ENCODE measurements at regions of chr18 and their contacts with region 1.

Region 1: GRCh38 chr18:62584241-62585120 is 61.7 kb downstream of the ZCCHC2 start:
- DNase-seq: peak; percentile 94
- H3K4me3 ChIP-seq: peak overlapping the region in 3 of 4 donors; percentile 15 to 24 (median 16)
- H3K27ac ChIP-seq: peak overlapping the region; percentile 10 to 66 (median 42)
- H3K4me1 ChIP-seq: peaks cover 0 to 21% (median 12%) of the 10 kb centered on the region in 4 donors
- H3K27me3 ChIP-seq: no peaks in the 10 kb centered on the region
- CTCF ChIP-seq: peak; percentile 98 to 99 (median 98)
- EP300 ChIP-seq: no peak
- POLR2A ChIP-seq: no peak

Region 2: DNA sequence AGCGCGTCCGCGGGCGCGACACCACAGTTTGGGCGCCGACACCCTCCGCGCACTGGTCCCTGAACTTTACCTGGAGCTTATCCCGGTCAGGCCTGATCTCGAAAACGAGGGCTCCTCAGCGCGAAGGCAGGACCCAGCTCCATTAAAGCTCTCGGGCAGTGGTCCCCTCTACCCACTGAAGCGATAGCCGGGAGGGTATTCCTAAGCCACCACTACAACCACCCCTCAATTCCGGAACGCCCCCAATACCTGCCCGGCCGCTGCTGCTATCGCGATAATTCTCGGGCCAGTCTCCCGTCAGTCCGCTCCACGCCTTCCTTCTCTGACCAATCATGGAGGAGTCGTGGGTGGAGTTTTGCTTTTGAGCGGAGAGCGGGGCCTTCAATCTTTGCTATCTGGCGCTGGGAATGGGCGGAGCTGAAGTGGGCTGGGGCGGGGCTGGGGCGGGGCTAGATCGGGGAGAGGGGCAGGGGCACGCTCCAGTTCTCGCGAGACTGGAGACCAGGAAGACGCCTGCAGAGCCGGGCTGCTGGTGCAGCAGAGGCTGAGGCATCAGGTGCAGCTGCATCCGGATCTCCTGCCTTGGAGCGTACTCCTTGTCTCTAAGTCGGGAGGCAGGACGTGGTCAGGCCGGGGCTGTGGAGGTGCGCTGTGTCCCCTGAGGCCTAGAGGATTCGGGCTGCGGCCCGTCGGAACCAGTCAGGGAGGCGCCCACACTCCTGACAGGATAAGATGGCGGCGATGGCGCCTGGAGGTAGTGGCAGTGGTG is 397.5 kb before region 1 on chr18 and contains the starts of genes PIGN and RELCH:
- intact Hi-C with region 1: loop called (anchors 5 kb)
- DNase-seq: peak; percentile 98
- H3K4me3 ChIP-seq: peak within 1 kb of the TSS; percentile 85 to 97 (median 91)
- H3K27ac ChIP-seq: peak within 1 kb of the TSS; percentile 79 to 90 (median 85)
- H3K4me1 ChIP-seq: peaks cover 0 to 41% (median 30%) of the 10 kb centered on the region in 4 donors
- H3K27me3 ChIP-seq: no peaks in the 10 kb centered on the region
- CTCF ChIP-seq: no peak
- EP300 ChIP-seq: no peak
- POLR2A ChIP-seq: peak; percentile 77 to 88
- total RNA-seq, gene PIGN: 18.4 to 23.2 (median 19.8) TPM
- total RNA-seq, gene RELCH: 19.3 to 28.8 (median 25.3) TPM

Region 3: DNA sequence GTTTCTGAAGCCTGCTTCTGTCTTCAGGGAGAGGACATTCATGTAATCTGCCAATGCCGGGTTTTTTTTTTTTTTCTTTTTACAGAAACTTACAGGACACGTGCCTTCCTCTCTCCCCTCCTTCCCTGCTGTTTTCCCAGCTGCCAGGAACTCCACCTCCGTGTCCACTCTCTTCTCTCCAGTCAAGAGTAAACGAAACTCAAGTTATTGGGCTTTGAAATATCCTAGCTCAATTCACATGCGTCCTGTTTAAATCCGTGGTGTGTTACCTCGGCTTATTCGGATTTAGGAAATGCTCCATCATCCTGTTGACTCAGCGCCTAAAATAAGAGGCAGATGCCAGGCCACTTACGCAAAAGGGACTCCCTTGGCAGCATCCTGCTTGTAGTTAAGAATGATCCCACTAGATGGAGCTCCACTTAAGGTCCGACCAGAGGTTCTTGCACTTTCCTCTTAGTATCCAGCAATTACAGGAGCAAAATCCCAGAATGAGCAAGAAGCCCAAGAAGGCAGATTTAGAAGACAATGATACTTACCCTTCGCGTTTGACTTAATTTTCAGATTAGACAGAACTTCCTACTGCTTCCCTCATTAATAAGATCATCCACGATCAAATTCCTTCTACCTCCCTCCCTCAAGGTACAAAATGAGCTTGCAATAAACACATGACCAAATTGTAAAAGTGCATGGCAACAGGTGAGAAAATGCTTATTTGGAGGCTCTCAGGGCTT is 158.9 kb before region 1 on chr18:
- intact Hi-C with region 1: loop called (anchors 1 kb)
- DNase-seq: peak; percentile 94
- H3K4me3 ChIP-seq: peak overlapping the region; percentile 4 to 47 (median 38)
- H3K27ac ChIP-seq: peak overlapping the region; percentile 79 to 85 (median 83)
- H3K4me1 ChIP-seq: peaks cover 0 to 13% (median 12%) of the 10 kb centered on the region in 4 donors
- H3K27me3 ChIP-seq: no peaks in the 10 kb centered on the region
- CTCF ChIP-seq: peak; percentile 58 to 80 (median 77)
- EP300 ChIP-seq: no peak
- POLR2A ChIP-seq: no peak

Region 4: DNA sequence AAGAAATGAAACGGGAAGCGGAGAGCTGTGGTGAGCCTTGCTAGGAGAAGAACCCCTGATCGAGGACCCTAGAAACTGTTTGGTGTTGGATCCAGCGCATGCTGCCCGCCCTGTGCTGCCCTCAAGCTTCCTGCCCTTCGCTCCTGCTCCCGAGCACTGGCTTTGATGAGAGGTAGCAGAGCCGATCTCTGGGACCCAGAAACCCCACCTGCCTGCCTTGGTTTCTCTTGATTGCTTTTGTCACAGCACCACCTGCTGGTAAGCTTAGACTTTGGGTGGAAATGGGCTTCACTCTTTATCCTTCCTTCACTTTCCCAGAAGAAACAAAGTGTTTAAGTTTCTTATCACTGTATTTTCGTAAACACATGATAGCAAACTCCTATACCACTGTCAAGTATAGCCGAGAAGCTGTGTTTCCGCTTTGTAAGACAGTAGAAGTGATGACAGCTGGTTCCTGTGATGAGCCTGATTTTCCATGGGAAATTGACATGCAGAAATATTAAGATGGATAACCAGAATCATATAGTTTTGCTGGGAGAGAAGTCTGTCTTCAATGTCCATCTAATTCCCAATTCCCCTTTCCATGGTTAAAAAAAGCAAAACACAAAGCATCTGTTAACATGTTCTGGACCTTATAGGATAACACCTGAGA is 398.2 kb after region 1 on chr18:
- intact Hi-C with region 1: loop called (anchors 2 kb)
- DNase-seq: peak; percentile 79
- H3K4me3 ChIP-seq: peak overlapping the region in 3 of 4 donors; percentile 21 to 43 (median 42)
- H3K27ac ChIP-seq: no peak overlapping the region
- H3K4me1 ChIP-seq: peaks cover 0 to 8% (median 6%) of the 10 kb centered on the region in 4 donors
- H3K27me3 ChIP-seq: no peaks in the 10 kb centered on the region
- CTCF ChIP-seq: peak; percentile 67 to 75 (median 70)
- EP300 ChIP-seq: no peak
- POLR2A ChIP-seq: no peak